ENCODE measurements at regions of chr6 and their contacts with region 1.

Region 1: GRCh38 chr6:18920701-18921100 is 533.6 kb downstream of the RNF144B start:
- DNase-seq: no peak
- ATAC-seq: no peak

Region 2: DNA sequence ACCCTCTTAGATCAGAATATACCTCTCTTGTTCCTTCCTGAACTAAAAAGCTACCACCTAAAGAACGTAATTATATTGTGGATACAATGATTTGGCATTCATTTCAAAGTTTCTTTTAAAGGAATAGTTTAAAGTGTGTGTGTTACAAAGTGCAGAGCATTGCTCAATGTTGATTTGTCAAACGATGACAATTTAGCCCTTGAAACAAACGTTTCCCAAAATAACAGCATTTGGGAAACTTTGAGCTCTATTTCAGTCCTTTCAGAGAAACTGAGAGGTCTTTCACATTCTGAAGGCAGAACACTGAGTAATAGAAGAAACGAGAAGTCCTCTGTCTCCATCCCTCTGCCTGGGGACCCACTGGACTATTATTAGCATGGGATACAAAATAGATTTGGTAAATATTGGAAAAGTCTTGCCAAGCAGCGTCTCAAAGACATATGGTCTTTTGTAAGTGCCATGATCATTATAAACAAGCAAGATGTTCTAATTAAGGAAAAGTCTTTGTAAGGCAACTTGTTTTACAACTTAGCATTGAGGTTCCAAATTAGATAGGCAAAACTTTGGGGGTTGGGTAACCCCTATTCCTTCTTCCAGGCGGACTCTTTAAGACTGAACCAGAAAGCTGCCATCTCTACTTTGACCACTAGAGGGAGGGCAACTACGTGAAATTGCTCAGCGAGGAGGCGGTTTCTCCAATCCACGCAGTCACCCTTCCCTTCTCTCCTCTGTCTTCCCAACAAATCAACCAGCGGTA is 324.7 kb before region 1 on chr6:
- intact Hi-C with region 1: loop called in 1 of 2 experiments (anchors 10 kb)
- DNase-seq: peak; percentile 44
- ATAC-seq: peak; percentile 87 to 92

Region 3: GRCh38 chr6:19180344-19181072 is 259.8 kb after region 1 on chr6:
- intact Hi-C with region 1: no loop called
- DNase-seq: peak; percentile 59
- ATAC-seq: peak; percentile 96 to 99

Measured in left cardiac atrium (tissue), 4 donors.